ENCODE measurements at regions of chr17 and their contacts with region 1.

Region 1: DNA sequence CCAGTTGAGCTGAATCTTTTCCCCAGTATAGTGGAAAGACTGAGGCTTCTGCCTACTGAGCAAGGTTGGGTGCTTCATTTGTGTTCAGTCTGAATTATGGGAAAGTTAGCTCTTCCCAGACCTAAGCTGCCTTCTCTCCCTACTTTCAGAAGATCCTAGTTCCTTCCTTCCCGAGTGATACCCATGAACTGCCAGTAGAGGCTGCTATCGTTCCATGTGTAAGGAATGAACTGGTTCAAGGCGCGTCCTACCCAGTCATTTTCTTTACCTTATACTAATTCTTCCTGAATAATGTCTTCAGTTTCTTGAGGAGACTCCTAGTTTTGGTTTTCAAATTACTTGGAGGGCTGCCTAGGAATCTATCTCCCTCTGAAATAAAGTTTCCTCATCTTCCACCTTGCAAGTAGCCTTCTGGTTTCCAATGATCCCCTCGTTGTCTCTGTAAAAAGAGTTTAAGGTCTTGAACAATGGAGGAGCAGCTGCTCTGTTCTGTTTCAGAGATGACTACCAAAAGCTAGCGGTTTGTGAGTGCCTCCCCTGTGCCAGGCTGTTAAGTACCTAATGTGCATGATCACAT is 934 bp upstream of the AOC2 start:
- DNase-seq: peak; percentile 63 to 76 (median 71)
- H3K4me3 ChIP-seq: no peak overlapping the region
- H3K27ac ChIP-seq: no peak overlapping the region
- H3K4me1 ChIP-seq: peaks cover 0 to 5% (median 0%) of the 10 kb centered on the region in 4 experiments
- H3K27me3 ChIP-seq: no peaks in the 10 kb centered on the region

Region 2: GRCh38 chr17:42832974-42833766 is 10.3 kb before region 1 on chr17 and contains the start of gene PSME3:
- CTCF ChIA-PET with region 1: interaction called, 17 read pairs
- POLR2A ChIA-PET with region 1: interaction called, 3 read pairs
- DNase-seq: peak; percentile 90 to 94 (median 90)
- H3K4me3 ChIP-seq: peak within 1 kb of the TSS; percentile 83 to 98 (median 85)
- H3K27ac ChIP-seq: peak within 1 kb of the TSS; percentile 90 to 92
- H3K4me1 ChIP-seq: peaks cover 13 to 21% (median 17%) of the 10 kb centered on the region in 4 experiments
- H3K27me3 ChIP-seq: no peaks in the 10 kb centered on the region

Region 3: GRCh38 chr17:42871647-42872046 is 28.2 kb after region 1 on chr17:
- CTCF ChIA-PET with region 1: interaction called, 16 read pairs
- POLR2A ChIA-PET with region 1: no interaction called
- DNase-seq: no peak
- H3K4me3 ChIP-seq: no peak overlapping the region
- H3K27ac ChIP-seq: no peak overlapping the region
- H3K4me1 ChIP-seq: no peaks in the 10 kb centered on the region
- H3K27me3 ChIP-seq: no peaks in the 10 kb centered on the region

Region 4: GRCh38 chr17:42928714-42929496 is 85.5 kb after region 1 on chr17:
- CTCF ChIA-PET with region 1: interaction called, 101 read pairs
- POLR2A ChIA-PET with region 1: interaction called, 3 read pairs
- DNase-seq: peak; percentile 94 to 98 (median 97)
- H3K4me3 ChIP-seq: peak overlapping the region in 5 of 7 experiments; percentile 0 to 56 (median 21)
- H3K27ac ChIP-seq: peak overlapping the region; percentile 82 to 94
- H3K4me1 ChIP-seq: peaks cover 6 to 26% (median 18%) of the 10 kb centered on the region in 4 experiments
- H3K27me3 ChIP-seq: no peaks in the 10 kb centered on the region

Region 5: DNA sequence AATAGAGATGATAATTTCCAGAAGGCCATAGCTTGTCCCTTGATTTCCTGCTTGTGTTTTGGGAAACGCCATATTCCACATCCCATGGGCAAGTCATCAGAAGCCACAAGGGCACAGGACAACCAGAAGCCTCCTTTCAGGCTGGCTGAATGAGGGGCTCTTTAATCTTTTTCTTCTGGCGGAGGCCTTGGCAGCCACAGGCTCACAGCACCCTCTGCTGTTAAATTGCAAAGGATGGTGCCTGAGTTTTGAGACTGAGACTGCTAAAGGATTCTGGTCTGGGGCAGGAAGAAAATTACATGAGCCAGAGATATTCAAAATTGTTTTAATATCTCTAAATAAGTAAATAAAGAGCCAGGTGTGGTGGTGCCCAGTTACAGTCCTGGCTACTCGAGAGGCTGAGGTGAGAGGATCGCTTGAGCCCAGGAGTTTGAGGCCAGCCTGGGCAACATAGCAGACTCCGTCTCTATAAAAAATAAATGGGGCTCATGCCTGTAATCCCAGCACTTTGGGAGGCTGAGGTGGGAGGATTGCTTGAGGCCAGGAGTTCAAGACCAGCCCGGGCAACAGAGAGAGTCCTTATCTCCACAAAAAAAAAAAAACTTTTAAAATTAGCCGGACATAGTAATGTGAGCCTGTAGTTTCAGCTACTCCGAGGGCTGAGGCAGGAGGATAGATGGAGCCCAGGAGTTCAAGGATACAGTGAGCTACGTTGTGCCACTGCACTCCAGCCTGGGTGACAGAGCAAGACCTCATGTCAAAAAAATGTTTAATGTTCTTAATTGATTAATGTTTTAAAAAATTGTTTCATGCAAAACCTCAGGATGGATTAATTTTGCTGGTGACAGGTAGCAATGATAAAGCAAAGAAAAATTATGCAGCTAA is 94.5 kb after region 1 on chr17:
- CTCF ChIA-PET with region 1: interaction called, 136 read pairs
- POLR2A ChIA-PET with region 1: interaction called, 7 read pairs
- DNase-seq: peak; percentile 67 to 83 (median 81)
- H3K4me3 ChIP-seq: no peak overlapping the region
- H3K27ac ChIP-seq: no peak overlapping the region
- H3K4me1 ChIP-seq: no peaks in the 10 kb centered on the region
- H3K27me3 ChIP-seq: no peaks in the 10 kb centered on the region

Region 6: GRCh38 chr17:42953669-42954068 is 110.2 kb after region 1 on chr17:
- CTCF ChIA-PET with region 1: interaction called, 12 read pairs
- POLR2A ChIA-PET with region 1: no interaction called
- DNase-seq: no peak
- H3K4me3 ChIP-seq: no peak overlapping the region
- H3K27ac ChIP-seq: no peak overlapping the region
- H3K4me1 ChIP-seq: no peaks in the 10 kb centered on the region
- H3K27me3 ChIP-seq: no peaks in the 10 kb centered on the region

Region 7: DNA sequence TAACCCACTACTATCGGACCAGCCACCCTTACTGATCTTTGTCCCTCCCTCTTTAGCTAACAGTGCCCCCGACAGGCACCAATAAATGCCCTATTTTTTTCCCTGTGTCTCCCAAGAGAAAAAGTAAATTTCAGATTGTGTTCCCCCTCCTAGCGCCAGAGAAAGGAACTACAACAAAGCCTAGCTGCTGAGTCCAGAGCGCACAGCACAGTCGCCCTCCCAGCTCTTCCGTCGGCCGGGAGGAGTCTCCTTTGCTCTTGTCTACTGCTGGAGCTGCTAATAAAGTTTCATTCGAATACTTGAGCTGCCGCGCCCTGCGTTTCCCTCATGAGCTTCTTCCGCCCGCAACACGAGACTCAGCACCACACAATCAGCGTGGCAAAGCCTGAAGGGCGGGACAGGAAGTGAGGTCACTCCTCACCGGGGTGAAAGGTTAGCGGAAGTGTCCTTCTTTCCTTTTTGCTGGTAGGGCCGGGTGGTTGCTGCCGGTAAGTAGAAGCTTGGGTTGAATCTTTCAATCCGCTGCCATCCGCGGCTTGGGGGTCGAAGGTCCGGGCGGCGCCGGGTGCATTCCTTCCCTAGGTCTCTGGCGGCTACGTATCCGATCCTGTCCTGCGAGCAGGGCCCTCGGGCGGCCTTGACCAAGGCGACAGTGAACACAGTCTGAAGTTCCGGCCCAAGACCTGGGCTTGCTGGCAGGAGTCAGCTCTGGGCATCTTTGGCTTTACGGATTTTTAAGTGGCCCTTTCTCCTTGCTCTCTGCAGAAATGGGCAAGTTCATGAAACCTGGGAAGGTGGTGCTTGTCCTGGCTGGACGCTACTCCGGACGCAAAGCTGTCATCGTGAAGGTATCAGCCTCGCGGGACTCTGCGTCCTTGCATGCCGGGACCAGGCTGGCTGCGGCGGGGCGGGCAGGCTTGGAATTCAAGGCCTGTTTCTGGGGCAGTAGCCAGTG is 154.8 kb after region 1 on chr17 and contains the start of gene RPL27:
- CTCF ChIA-PET with region 1: interaction called, 12 read pairs
- POLR2A ChIA-PET with region 1: no interaction called
- DNase-seq: peak; percentile 100
- H3K4me3 ChIP-seq: peak within 1 kb of the TSS; percentile 75 to 97 (median 93)
- H3K27ac ChIP-seq: peak within 1 kb of the TSS; percentile 97 to 99
- H3K4me1 ChIP-seq: peaks cover 4 to 27% (median 19%) of the 10 kb centered on the region in 4 experiments
- H3K27me3 ChIP-seq: no peaks in the 10 kb centered on the region